ENCODE measurements at regions of chr3 and their contacts with region 1.

Region 1: DNA sequence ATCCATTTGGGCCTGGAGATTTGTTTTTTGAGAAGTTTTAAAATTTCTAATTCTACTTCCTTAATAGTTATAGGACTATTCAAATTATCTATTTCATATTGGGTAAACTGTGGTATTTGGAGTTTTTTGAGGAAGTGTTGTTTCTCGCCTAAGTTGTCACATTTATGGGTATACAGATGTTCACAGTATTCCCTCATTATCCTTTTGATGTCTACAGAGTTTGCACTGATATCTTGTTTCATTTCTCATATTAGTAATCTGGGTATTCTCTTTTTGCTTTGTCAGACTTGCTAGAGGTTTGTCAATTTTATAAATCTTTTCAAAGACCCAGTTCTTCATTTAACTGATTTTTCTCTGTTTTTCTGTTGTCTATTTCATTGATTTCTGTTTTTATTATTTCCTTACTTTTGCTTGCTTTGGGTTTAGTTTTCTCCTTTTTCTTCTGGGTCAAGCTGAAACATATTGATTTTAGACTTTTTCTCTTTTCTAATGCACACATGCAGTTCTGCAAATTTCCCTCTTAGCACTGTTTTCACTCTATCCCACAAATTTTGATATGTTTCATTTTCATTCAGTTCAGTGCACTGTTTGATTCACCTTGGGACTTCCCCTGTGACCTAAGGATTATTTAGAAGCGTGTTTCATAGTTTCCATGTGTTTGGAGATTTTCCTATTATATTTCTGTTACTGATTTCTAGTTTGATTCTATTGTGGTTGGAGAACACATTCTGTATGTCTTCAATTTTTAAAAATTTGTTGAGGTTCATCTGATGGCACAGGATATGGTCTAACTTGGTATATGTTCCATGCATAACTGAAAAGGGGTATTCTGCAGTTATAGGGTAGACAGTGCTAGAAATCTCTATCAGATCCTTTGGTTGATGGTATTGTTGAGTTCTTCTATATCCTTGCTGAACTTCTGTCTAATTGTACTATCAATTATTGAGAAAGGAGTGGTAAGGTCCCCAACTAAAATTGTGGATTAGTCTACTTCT is 79.6 kb downstream of the SUMF1 start:
- DNase-seq: no peak
- ATAC-seq: peak; percentile 87
- H3K4me3 Mint-ChIP-seq: no peak overlapping the region
- H3K27ac Mint-ChIP-seq: peak overlapping the region; percentile 66
- H3K4me1 Mint-ChIP-seq: peaks cover 35% of the 10 kb centered on the region
- H3K27me3 Mint-ChIP-seq: no peaks in the 10 kb centered on the region
- CTCF ChIP-seq: no peak

Region 2: DNA sequence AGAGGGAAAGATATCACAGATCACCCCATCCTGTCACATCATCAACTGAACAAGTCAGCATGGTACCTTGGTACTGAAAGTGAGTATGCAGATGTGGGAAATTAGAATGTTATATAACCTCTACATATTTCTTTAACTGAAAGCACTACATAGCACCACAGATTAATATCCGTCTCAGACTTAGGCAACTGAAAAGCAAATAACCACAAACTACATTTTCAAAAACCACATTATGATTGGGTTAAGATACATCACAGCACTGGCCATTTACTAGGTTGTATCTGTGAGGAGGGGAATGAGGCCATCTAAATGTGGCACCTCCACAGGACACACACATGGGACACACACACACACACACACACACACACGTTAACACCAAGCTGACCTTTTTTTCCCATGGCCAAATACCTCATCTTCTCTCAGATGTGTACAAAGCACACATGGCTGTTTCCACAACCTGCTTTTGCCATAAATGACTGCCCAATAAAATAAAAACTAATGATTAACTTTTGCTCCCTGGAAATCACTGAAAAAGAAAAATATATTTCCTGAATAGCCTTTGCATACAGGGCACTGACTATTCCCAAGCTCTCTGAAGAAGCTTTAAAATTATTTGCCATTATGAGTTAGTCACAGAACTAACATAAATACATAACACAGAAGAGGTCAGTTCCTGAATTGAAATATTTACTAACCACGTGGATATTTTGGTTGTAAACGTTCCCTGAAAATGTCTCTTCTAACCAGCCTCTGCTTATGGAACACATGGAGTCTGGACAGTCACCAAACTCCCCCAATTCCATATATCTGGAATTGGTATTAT is 19.4 kb after region 1 on chr3:
- CTCF ChIA-PET with region 1: interaction called, 3 read pairs
- POLR2A ChIA-PET with region 1: no interaction called
- intact Hi-C with region 1: loop called (anchors 1 kb)
- DNase-seq: no peak
- ATAC-seq: peak; percentile 38
- H3K4me3 Mint-ChIP-seq: no peak overlapping the region
- H3K27ac Mint-ChIP-seq: no peak overlapping the region
- H3K4me1 Mint-ChIP-seq: peaks cover 38% of the 10 kb centered on the region
- H3K27me3 Mint-ChIP-seq: no peaks in the 10 kb centered on the region
- CTCF ChIP-seq: no peak

Region 3: GRCh38 chr3:4421121-4421520 is 33.6 kb after region 1 on chr3:
- CTCF ChIA-PET with region 1: no interaction called
- POLR2A ChIA-PET with region 1: no interaction called
- intact Hi-C with region 1: loop called (anchors 5 kb)
- DNase-seq: peak; percentile 37
- ATAC-seq: peak; percentile 85
- H3K4me3 Mint-ChIP-seq: no peak overlapping the region
- H3K27ac Mint-ChIP-seq: peak overlapping the region; percentile 35
- H3K4me1 Mint-ChIP-seq: peaks cover 26% of the 10 kb centered on the region
- H3K27me3 Mint-ChIP-seq: no peaks in the 10 kb centered on the region
- CTCF ChIP-seq: no peak

Region 4: GRCh38 chr3:4584456-4585249 is 197.1 kb after region 1 on chr3:
- CTCF ChIA-PET with region 1: no interaction called
- POLR2A ChIA-PET with region 1: no interaction called
- intact Hi-C with region 1: no loop called
- DNase-seq: peak; percentile 58
- ATAC-seq: peak; percentile 81
- H3K4me3 Mint-ChIP-seq: peak overlapping the region; percentile 70
- H3K27ac Mint-ChIP-seq: peak overlapping the region; percentile 89
- H3K4me1 Mint-ChIP-seq: peaks cover 78% of the 10 kb centered on the region
- H3K27me3 Mint-ChIP-seq: no peaks in the 10 kb centered on the region
- CTCF ChIP-seq: no peak